ENCODE measurements at regions of chr9 and their contacts with region 1.

Region 1: GRCh38 chr9:98315551-98316060 is 60.2 kb upstream of the TBC1D2 start:
- DNase-seq: peak; percentile 78
- ATAC-seq: peak; percentile 79

Region 2: DNA sequence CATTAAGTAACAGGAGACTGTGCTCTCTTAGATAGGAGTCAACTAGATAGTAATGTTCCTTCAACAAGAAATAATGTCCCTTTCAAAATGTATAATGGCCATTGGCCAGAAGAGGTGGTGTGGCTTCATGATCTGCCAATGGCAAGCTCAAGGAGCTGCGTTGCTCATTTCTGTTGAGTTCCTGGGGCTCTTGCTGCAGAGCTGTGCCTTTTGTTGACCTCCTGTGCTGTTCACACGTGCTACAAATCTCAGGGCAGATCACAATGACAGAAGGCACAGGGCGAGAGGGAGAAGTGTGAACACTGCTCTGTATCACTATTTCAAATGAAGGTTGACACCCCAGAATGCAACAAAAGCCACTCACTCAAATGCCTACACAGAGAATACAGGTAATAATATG is 44.1 kb before region 1 on chr9:
- intact Hi-C with region 1: no loop called
- DNase-seq: no peak
- ATAC-seq: no peak

Region 3: DNA sequence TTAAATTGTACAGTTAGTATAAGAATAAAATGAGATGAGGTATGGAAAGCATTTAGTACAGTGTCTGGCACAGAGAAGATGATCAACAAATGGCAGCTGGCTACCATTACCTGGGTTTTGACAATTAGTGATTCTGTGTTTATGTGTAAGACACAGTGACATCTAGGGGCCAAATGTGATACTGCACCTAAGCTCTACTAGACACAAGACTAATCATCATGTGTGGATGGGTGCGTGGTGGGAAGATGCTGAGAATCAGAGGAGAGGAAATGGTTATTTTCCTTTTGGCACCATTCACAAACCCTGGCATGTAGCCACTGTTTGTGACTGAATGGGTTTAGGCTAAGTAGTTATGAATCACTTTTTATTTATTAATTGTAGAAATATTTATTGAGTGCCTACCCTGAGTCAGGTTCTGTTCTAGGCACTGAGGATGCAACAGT is 49.6 kb after region 1 on chr9:
- intact Hi-C with region 1: no loop called
- DNase-seq: no peak
- ATAC-seq: no peak

Region 4: GRCh38 chr9:98707166-98708102 is 391.8 kb after region 1 on chr9:
- intact Hi-C with region 1: loop called (anchors 5 kb)
- DNase-seq: no peak
- ATAC-seq: peak; percentile 63

Region 5: GRCh38 chr9:98775831-98776441 is 460.3 kb after region 1 on chr9:
- intact Hi-C with region 1: loop called (anchors 1 kb)
- DNase-seq: no peak
- ATAC-seq: peak; percentile 31

Region 6: GRCh38 chr9:98791147-98792095 is 475.8 kb after region 1 on chr9:
- intact Hi-C with region 1: loop called (anchors 5 kb)
- DNase-seq: peak; percentile 87
- ATAC-seq: peak; percentile 87